Naive thymus-derived CD4-positive, alpha-beta T cell (primary cell): ENCODE measurements at regions of chr11 and their contacts with region 1.

Region 1: DNA sequence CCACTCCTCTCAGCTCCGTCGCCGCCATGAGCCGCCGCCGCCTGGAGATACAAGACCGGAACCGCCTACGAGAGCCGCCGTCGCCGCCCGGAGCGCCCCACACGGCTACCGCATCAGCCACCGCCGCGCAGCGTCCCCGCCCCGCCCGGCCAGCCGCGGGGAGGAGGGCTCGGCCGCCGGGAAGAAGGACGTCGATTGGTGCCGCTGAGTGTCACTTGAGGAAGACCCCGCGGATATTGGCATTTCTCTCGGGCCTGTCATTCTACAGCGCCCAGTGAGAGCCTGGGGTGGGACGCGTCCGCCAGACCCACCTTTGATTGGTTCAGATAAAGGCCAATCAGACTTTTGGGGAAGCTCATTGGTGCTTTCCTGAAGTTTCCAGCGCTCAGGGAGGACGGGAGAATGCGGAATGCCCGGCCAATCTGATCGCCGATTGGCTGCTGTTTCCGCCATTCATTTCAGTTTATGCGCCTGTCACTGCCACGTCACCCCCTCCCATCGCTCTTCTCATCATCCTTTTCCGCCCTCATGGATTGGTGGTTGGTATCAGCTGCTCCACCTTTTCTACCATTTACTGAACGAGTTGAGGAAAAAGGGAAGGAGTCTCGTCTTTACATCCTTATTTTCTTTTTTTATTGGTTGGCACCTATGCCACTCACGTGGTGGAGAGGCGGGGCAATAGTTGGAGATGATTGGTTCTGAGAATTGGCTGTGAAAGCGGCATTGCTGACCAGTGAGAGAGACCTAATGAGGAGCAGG is at the start of gene OSBP:
- DNase-seq: peak; percentile 86 to 100 (median 99)
- ATAC-seq: peak; percentile 84
- H3K4me3 ChIP-seq: peak within 1 kb of the TSS; percentile 72
- H3K4me3 Mint-ChIP-seq: peak within 1 kb of the TSS; percentile 82 to 99 (median 94)
- H3K27ac ChIP-seq: peak within 1 kb of the TSS; percentile 93
- H3K27ac Mint-ChIP-seq: peak within 1 kb of the TSS; percentile 84 to 98 (median 94)
- H3K4me1 ChIP-seq: peaks cover 26 to 29% of the 10 kb centered on the region in 2 donors
- H3K4me1 Mint-ChIP-seq: peaks cover 35 to 54% (median 41%) of the 10 kb centered on the region in 7 donors
- H3K27me3 ChIP-seq: no peaks in the 10 kb centered on the region
- H3K27me3 Mint-ChIP-seq: no peaks in the 10 kb centered on the region
- total RNA-seq, gene OSBP: 39.8 to 57.6 (median 52.4) TPM

Region 2: GRCh38 chr11:59542142-59542810 is 73.5 kb before region 1 on chr11:
- CTCF ChIA-PET with region 1: no interaction called
- POLR2A ChIA-PET with region 1: interaction called, 13 read pairs
- intact Hi-C with region 1: loop called in 1 of 2 experiments (anchors 1 kb)
- DNase-seq: no peak
- ATAC-seq: no peak
- H3K4me3 ChIP-seq: no peak overlapping the region
- H3K4me3 Mint-ChIP-seq: no peak overlapping the region
- H3K27ac ChIP-seq: no peak overlapping the region
- H3K27ac Mint-ChIP-seq: no peak overlapping the region
- H3K4me1 ChIP-seq: no peaks in the 10 kb centered on the region
- H3K4me1 Mint-ChIP-seq: peaks cover 7 to 9% (median 8%) of the 10 kb centered on the region in 7 donors
- H3K27me3 ChIP-seq: no peaks in the 10 kb centered on the region
- H3K27me3 Mint-ChIP-seq: peaks cover 0 to 6% (median 0%) of the 10 kb centered on the region in 5 donors

Region 3: DNA sequence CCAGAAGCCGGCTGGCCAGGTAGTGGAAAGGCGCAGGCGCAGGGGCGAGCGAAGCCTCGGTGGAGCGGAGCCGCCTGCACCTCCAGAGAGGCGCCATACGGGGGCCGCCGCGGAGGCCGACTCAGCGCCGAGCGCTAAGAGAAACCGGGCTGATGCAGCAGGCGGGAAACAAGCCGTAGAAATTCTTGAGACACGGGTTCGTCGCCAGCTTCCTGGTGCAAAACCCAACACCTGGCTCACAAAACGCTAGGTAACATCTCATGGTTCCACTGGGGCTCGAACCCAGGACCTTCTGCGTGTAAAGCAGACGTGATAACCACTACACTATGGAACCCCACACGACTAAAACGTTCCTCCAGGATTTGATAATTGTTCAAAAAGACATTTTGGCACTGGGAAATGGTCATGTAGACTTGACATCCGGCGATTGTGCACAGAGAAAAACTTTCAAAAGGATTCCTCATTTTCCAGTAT is 65.4 kb before region 1 on chr11:
- CTCF ChIA-PET with region 1: no interaction called
- POLR2A ChIA-PET with region 1: interaction called, 20 read pairs
- intact Hi-C with region 1: loop called (anchors 1 kb)
- DNase-seq: peak; percentile 67 to 95 (median 89)
- ATAC-seq: peak; percentile 92
- H3K4me3 ChIP-seq: peak overlapping the region; percentile 59
- H3K4me3 Mint-ChIP-seq: peak overlapping the region; percentile 70 to 98 (median 92)
- H3K27ac ChIP-seq: peak overlapping the region; percentile 66
- H3K27ac Mint-ChIP-seq: peak overlapping the region; percentile 89 to 100 (median 98)
- H3K4me1 ChIP-seq: peaks cover under 1 to 4% of the 10 kb centered on the region in 2 donors
- H3K4me1 Mint-ChIP-seq: peaks cover 0 to 40% (median 32%) of the 10 kb centered on the region in 7 donors
- H3K27me3 ChIP-seq: no peaks in the 10 kb centered on the region
- H3K27me3 Mint-ChIP-seq: peaks cover 0 to 28% (median 0%) of the 10 kb centered on the region in 5 donors

Region 4: GRCh38 chr11:59560702-59561469 is 54.9 kb before region 1 on chr11:
- CTCF ChIA-PET with region 1: interaction called, 3 read pairs
- POLR2A ChIA-PET with region 1: interaction called, 29 read pairs
- intact Hi-C with region 1: loop called (anchors 1 kb)
- DNase-seq: peak; percentile 59 to 82 (median 78)
- ATAC-seq: peak; percentile 85
- H3K4me3 ChIP-seq: peak overlapping the region; percentile 98
- H3K4me3 Mint-ChIP-seq: peak overlapping the region; percentile 81 to 99 (median 96)
- H3K27ac ChIP-seq: peak overlapping the region; percentile 72
- H3K27ac Mint-ChIP-seq: peak overlapping the region; percentile 87 to 99 (median 96)
- H3K4me1 ChIP-seq: peaks cover 20 to 26% of the 10 kb centered on the region in 2 donors
- H3K4me1 Mint-ChIP-seq: peaks cover 27 to 63% (median 51%) of the 10 kb centered on the region in 7 donors
- H3K27me3 ChIP-seq: no peaks in the 10 kb centered on the region
- H3K27me3 Mint-ChIP-seq: peaks cover 0 to 14% (median 0%) of the 10 kb centered on the region in 5 donors

Region 5: DNA sequence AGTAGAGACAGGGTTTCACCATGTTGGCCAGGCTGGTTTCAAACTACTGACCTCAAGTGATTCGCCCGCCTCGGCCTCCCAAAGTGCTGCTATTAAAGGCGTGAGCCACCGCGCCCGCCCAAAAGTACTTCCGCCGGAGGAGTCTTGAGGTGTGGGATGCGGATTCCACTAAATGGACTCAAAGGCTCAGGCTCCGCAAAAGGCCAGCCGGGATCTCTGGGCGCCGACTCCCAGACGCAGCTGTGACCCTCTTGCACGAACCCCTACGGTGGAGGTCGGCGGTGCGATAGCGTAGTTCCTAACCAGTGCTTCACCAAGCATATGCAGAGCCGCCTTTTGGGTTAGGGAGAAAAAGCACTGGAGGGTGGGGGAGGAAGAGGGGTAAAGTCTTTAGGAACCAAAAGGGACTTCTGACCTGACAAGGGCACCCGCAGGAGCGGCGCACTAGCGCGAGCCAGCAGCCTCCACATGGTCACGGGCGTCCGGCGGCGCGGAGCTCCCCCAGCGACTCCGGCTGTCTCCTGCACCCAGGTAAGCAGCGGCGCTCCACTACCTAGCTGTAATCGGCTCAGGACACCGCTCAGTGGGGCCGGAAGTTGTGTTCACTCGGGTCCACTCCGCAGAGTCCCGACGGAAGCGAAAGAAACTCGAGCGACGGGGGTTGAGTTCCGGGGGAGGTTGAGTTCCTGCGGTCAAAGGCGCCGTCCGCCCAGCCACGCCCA is 194.5 kb after region 1 on chr11 and contains the start of gene MRPL16:
- CTCF ChIA-PET with region 1: interaction called, 3 read pairs
- POLR2A ChIA-PET with region 1: no interaction called
- intact Hi-C with region 1: loop called (anchors 1 kb)
- DNase-seq: peak; percentile 74 to 89 (median 83)
- ATAC-seq: peak; percentile 100
- H3K4me3 ChIP-seq: peak within 1 kb of the TSS; percentile 83
- H3K4me3 Mint-ChIP-seq: peak within 1 kb of the TSS; percentile 88 to 95 (median 92)
- H3K27ac ChIP-seq: peak within 1 kb of the TSS; percentile 75
- H3K27ac Mint-ChIP-seq: peak within 1 kb of the TSS; percentile 86 to 94 (median 92)
- H3K4me1 ChIP-seq: peaks cover 4 to 9% of the 10 kb centered on the region in 2 donors
- H3K4me1 Mint-ChIP-seq: peaks cover 6 to 35% (median 29%) of the 10 kb centered on the region in 7 donors
- H3K27me3 ChIP-seq: no peaks in the 10 kb centered on the region
- H3K27me3 Mint-ChIP-seq: peaks cover 0 to 7% (median 0%) of the 10 kb centered on the region in 5 donors
- total RNA-seq, gene MRPL16: 25.1 to 65.6 (median 35.2) TPM